B cell (primary cell): ENCODE measurements at regions of chr10 and their contacts with region 1.

Region 1: GRCh38 chr10:63217120-63217605 is 84.0 kb downstream of the NRBF2 start:
- DNase-seq: peak; percentile 73
- ATAC-seq: peak; percentile 88
- H3K4me3 ChIP-seq: no peak overlapping the region
- H3K4me3 Mint-ChIP-seq: no peak overlapping the region
- H3K27ac ChIP-seq: peak overlapping the region in 1 of 2 donors; percentile 25
- H3K27ac Mint-ChIP-seq: peak overlapping the region; percentile 43
- H3K4me1 ChIP-seq: peaks cover 29 to 39% of the 10 kb centered on the region in 2 donors
- H3K4me1 Mint-ChIP-seq: peaks cover 54% of the 10 kb centered on the region
- H3K27me3 ChIP-seq: no peaks in the 10 kb centered on the region
- H3K27me3 Mint-ChIP-seq: no peaks in the 10 kb centered on the region
- CTCF ChIP-seq: peak; percentile 83

Region 2: GRCh38 chr10:63197344-63198106 is 19.6 kb before region 1 on chr10:
- CTCF ChIA-PET with region 1: interaction called, 10 read pairs
- POLR2A ChIA-PET with region 1: no interaction called
- intact Hi-C with region 1: no loop called
- DNase-seq: no peak
- ATAC-seq: no peak
- H3K4me3 ChIP-seq: no peak overlapping the region
- H3K4me3 Mint-ChIP-seq: no peak overlapping the region
- H3K27ac ChIP-seq: no peak overlapping the region
- H3K27ac Mint-ChIP-seq: peak overlapping the region; percentile 32
- H3K4me1 ChIP-seq: peaks cover 0 to 5% of the 10 kb centered on the region in 2 donors
- H3K4me1 Mint-ChIP-seq: peaks cover 8% of the 10 kb centered on the region
- H3K27me3 ChIP-seq: no peaks in the 10 kb centered on the region
- H3K27me3 Mint-ChIP-seq: no peaks in the 10 kb centered on the region
- CTCF ChIP-seq: no peak

Region 3: DNA sequence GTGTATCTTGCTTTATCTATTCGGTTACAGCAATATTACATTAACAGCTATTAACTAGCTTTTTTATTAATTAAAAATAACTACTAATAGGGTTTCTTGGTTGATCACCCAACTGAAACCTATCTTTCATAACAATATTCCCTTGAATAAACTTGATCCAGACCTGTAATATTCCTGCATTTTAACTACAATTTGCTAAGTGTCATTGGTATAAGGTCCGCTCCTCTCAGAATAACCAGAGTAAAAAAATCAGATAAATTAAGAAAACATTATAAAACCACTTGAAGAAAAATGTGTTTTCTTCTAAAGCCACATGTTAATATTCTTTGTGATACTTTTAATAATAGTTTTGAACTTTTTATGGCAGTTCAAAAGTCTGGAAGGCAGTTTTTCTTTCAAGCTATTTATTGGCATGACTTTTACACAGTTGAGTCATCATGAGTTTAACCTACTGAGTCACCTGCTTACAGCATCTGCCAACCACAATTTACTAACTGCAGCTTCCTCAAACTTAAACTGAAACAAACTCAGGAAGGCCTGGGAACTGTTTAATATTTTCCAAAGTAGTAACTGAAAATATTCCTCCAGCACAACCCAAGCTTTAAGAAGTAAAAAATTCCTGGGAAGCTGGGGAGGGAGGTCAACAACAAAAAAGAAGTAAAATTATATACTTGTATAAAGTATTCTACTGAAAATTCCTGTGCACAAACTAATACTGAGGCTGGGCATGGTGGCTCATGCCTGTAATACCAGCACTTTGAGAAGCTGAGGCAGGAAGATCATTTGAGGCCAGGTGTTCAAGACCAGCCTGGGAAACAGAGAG is 19.2 kb after region 1 on chr10:
- CTCF ChIA-PET with region 1: interaction called, 6 read pairs
- POLR2A ChIA-PET with region 1: no interaction called
- intact Hi-C with region 1: loop called (anchors 2 kb)
- DNase-seq: peak; percentile 59
- ATAC-seq: peak; percentile 77
- H3K4me3 ChIP-seq: no peak overlapping the region
- H3K4me3 Mint-ChIP-seq: peak overlapping the region; percentile 26
- H3K27ac ChIP-seq: no peak overlapping the region
- H3K27ac Mint-ChIP-seq: peak overlapping the region; percentile 37
- H3K4me1 ChIP-seq: peaks cover 26 to 44% of the 10 kb centered on the region in 2 donors
- H3K4me1 Mint-ChIP-seq: peaks cover 58% of the 10 kb centered on the region
- H3K27me3 ChIP-seq: no peaks in the 10 kb centered on the region
- H3K27me3 Mint-ChIP-seq: no peaks in the 10 kb centered on the region
- CTCF ChIP-seq: no peak

Region 4: DNA sequence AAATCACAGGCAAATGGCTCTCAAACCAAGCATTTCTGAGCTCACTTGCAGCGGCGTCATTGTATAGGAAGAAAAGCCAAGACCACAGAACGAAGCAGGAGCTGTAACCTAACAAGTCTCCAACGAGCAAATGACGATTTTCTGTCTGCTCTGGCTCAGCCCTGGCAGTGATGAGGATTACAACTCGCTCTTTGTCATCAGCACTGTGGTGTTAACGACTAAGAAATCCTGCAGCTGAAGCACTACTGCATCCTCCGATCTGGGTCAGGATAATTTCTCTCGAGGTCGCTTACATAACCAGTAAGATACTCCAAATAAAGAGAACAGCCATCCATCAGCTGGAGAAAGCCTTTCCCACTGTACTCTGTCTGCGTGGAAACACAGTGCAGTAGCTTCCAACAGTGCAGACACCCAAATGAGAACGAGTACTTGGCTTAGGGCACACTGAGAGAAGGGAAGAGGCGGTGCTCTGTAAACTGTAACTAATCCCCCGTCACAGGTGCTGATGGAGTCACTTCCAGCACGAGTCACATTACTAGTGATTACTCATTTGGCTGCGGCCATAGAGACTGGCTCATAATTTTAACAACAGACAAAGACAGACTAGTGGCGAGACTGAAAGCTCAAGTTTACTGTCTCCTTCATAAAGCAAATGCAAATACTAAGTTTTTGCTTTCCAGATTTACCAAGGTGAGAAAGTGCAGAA is 51.8 kb after region 1 on chr10:
- CTCF ChIA-PET with region 1: interaction called, 13 read pairs
- POLR2A ChIA-PET with region 1: no interaction called
- intact Hi-C with region 1: loop called (anchors 1 kb)
- DNase-seq: peak; percentile 93
- ATAC-seq: peak; percentile 89
- H3K4me3 ChIP-seq: peak overlapping the region; percentile 64 to 100 (median 95)
- H3K4me3 Mint-ChIP-seq: peak overlapping the region; percentile 100
- H3K27ac ChIP-seq: peak overlapping the region; percentile 85 to 94
- H3K27ac Mint-ChIP-seq: peak overlapping the region; percentile 99
- H3K4me1 ChIP-seq: peaks cover 14 to 18% of the 10 kb centered on the region in 2 donors
- H3K4me1 Mint-ChIP-seq: peaks cover 31% of the 10 kb centered on the region
- H3K27me3 ChIP-seq: no peaks in the 10 kb centered on the region
- H3K27me3 Mint-ChIP-seq: no peaks in the 10 kb centered on the region
- CTCF ChIP-seq: peak; percentile 43

Region 5: GRCh38 chr10:63465293-63466143 is 248.4 kb after region 1 on chr10 and contains the start of gene JMJD1C:
- CTCF ChIA-PET with region 1: interaction called, 12 read pairs
- POLR2A ChIA-PET with region 1: no interaction called
- intact Hi-C with region 1: loop called (anchors 2 kb)
- DNase-seq: peak; percentile 84
- ATAC-seq: peak; percentile 72
- H3K4me3 ChIP-seq: peak within 1 kb of the TSS; percentile 66 to 97 (median 92)
- H3K4me3 Mint-ChIP-seq: peak within 1 kb of the TSS; percentile 98
- H3K27ac ChIP-seq: peak within 1 kb of the TSS; percentile 60 to 75
- H3K27ac Mint-ChIP-seq: peak within 1 kb of the TSS; percentile 95
- H3K4me1 ChIP-seq: peaks cover 13% of the 10 kb centered on the region in 2 donors
- H3K4me1 Mint-ChIP-seq: peaks cover 18% of the 10 kb centered on the region
- H3K27me3 ChIP-seq: no peaks in the 10 kb centered on the region
- H3K27me3 Mint-ChIP-seq: no peaks in the 10 kb centered on the region
- CTCF ChIP-seq: no peak
- total RNA-seq, gene JMJD1C: 235 and 247 TPM in 2 replicates

Region 6: GRCh38 chr10:63547628-63548360 is 330.6 kb after region 1 on chr10:
- CTCF ChIA-PET with region 1: no interaction called
- POLR2A ChIA-PET with region 1: no interaction called
- intact Hi-C with region 1: no loop called
- DNase-seq: no peak
- ATAC-seq: no peak
- H3K4me3 ChIP-seq: no peak overlapping the region
- H3K4me3 Mint-ChIP-seq: no peak overlapping the region
- H3K27ac ChIP-seq: no peak overlapping the region
- H3K27ac Mint-ChIP-seq: no peak overlapping the region
- H3K4me1 ChIP-seq: no peaks in the 10 kb centered on the region
- H3K4me1 Mint-ChIP-seq: peaks cover 7% of the 10 kb centered on the region
- H3K27me3 ChIP-seq: no peaks in the 10 kb centered on the region
- H3K27me3 Mint-ChIP-seq: no peaks in the 10 kb centered on the region
- CTCF ChIP-seq: no peak

Region 7: GRCh38 chr10:63720072-63720537 is 502.9 kb after region 1 on chr10:
- CTCF ChIA-PET with region 1: interaction called, 98 read pairs
- POLR2A ChIA-PET with region 1: no interaction called
- intact Hi-C with region 1: loop called (anchors 1 kb)
- DNase-seq: peak; percentile 76
- ATAC-seq: peak; percentile 94
- H3K4me3 ChIP-seq: no peak overlapping the region
- H3K4me3 Mint-ChIP-seq: no peak overlapping the region
- H3K27ac ChIP-seq: no peak overlapping the region
- H3K27ac Mint-ChIP-seq: no peak overlapping the region
- H3K4me1 ChIP-seq: no peaks in the 10 kb centered on the region
- H3K4me1 Mint-ChIP-seq: peaks cover 7% of the 10 kb centered on the region
- H3K27me3 ChIP-seq: peaks cover 0 to 13% (median 2%) of the 10 kb centered on the region in 4 experiments
- H3K27me3 Mint-ChIP-seq: peaks cover 13% of the 10 kb centered on the region
- CTCF ChIP-seq: peak; percentile 100